Heart right ventricle (tissue), 16 donors: ENCODE measurements at regions of chr2 and their contacts with region 1.

Region 1: DNA sequence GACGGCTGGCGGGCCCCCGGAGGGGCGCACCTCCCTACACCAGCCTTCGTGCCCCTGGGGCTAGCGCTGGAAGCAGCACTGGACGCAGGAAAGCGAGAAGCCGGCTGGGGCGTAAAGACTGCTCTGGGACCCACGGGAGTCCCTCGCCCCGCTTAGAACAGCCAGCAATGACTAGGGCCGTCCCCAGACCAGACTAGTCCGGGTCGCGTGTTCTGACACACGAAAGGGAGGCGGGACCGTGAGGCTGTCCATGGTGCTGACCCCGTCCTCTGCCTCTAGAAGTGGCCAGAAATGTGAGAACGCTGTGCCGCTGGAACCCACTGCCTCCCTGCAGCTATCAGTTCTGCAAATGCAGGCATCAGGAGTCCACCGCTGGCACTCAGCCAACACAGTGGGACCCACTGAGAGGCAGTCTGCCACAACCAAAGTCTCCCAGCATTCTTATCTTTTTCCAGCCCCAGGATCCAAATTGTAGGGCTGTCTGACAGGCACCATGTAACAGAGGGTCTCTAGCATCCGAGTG is at the start of gene UCN:
- DNase-seq: peak; percentile 44 to 59
- ATAC-seq: peak; percentile 20 to 60 (median 44)
- H3K4me3 ChIP-seq: no peak within 1 kb of the TSS
- H3K27ac ChIP-seq: peak within 1 kb of the TSS in 1 of 10 donors; percentile 41
- H3K4me1 ChIP-seq: peaks cover 6 to 30% (median 17%) of the 10 kb centered on the region in 9 donors
- H3K27me3 ChIP-seq: peaks cover 0 to 43% (median 38%) of the 10 kb centered on the region in 7 donors
- CTCF ChIP-seq: no peak
- total RNA-seq, gene UCN: 0.51 to 2.0 (median 1.1) TPM in 9 of 10 donors, not detected in the other

Region 2: GRCh38 chr2:27264753-27265535 is 43.5 kb before region 1 on chr2:
- intact Hi-C with region 1: loop called in 1 of 10 experiments (anchors 5 kb)
- DNase-seq: peak; percentile 71 to 77
- ATAC-seq: peak; percentile 68 to 88 (median 80)
- H3K4me3 ChIP-seq: peak overlapping the region in 9 of 10 donors; percentile 30 to 68 (median 63)
- H3K27ac ChIP-seq: peak overlapping the region in 8 of 10 donors; percentile 34 to 77 (median 48)
- H3K4me1 ChIP-seq: peaks cover 0 to 47% (median 34%) of the 10 kb centered on the region in 9 donors
- H3K27me3 ChIP-seq: peaks cover 0 to 97% (median 52%) of the 10 kb centered on the region in 7 donors
- CTCF ChIP-seq: peak in 8 of 9 donors; percentile 30 to 74 (median 57)